H1 (cell line): ENCODE measurements at regions of chr11 and their contacts with region 1.

Region 1: DNA sequence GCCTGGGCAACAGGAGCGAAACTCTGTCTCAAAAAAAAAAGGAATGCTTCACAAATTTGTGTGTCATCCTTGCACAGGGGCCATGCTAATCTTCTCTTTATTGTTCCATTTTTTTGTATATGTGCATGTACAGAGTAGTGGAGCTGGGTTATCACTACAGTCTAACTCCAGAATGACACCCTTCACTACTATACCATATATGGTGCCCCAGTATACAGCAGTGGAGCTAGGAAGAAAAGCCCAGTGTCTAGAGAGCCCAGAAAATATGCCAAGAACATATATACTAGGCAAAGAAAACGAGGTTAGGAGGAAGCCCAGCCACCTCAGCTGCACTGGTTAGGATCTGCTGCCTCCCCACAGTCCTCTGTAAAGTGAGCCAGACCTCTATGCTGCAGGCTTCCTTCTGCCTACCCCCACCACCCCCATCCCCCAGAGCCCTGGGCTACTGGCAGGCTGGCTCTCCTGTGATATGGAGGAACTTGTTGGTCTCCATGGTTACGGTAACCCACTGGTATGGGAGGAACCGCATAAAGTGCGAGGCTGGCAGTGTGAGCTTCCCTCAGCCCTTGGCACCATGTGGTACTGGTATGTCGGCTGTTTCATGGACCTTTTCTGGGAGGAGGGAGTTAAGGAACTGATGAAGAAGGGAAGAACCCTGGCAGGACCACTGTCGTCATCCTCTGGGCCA is 34.3 kb downstream of the RCOR2 start:
- DNase-seq: peak in 1 of 2 experiments; percentile 69
- H3K4me3 ChIP-seq: peak overlapping the region in 2 of 4 experiments; percentile 10 to 13; a peak in 1 of 8 replicates
- H3K27ac ChIP-seq: no peak overlapping the region
- H3K4me1 ChIP-seq: peaks cover 13 to 30% (median 20%) of the 10 kb centered on the region in 4 experiments
- H3K27me3 ChIP-seq: no peaks in the 10 kb centered on the region
- CTCF ChIP-seq: no peak
- EP300 ChIP-seq: 0 out of 3 replicates have a peak, but pooled peaks of 1 of the 2 experiments have one; percentile 38
- POLR2A ChIP-seq: no peak; a peak in 1 of 3 replicates
- RAD21 ChIP-seq: 0 out of 4 replicates have a peak, but pooled peaks of 1 of the 2 experiments have one; percentile 3

Region 2: DNA sequence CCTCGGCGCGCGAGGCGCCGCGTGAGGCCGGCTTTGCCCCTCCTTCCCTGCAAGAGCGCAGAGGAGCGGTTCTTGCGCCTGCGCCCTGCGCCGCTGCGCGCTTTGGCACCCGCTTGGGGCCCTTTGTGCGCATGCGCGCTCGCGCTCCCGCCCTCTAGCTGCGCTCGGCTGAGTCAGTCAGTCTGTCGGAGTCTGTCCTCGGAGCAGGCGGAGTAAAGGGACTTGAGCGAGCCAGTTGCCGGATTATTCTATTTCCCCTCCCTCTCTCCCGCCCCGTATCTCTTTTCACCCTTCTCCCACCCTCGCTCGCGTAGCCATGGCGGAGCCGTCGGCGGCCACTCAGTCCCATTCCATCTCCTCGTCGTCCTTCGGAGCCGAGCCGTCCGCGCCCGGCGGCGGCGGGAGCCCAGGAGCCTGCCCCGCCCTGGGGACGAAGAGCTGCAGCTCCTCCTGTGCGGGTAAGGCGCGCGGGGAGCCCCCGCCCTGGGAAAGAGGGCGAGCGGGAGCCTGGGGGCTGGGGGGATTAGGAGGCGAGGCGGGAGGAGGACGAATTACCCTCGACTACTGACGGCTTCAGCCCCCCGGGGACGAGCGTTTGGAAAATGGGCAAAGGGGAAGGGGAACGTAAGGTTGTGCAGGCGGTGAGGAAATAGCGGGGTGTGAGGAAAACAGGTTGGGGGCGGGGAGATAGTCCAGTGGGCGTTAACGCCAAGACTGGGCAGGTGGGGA is 201.2 kb before region 1 on chr11 and contains the start of gene RTN3:
- CTCF ChIA-PET with region 1: no interaction called
- POLR2A ChIA-PET with region 1: no interaction called
- DNase-seq: peak; percentile 98 to 99
- H3K4me3 ChIP-seq: peak within 1 kb of the TSS; percentile 71 to 94 (median 89)
- H3K27ac ChIP-seq: peak within 1 kb of the TSS; percentile 68
- H3K4me1 ChIP-seq: peaks cover 0 to 10% (median 5%) of the 10 kb centered on the region in 4 experiments; a peak in 5 of 7 replicates
- H3K27me3 ChIP-seq: no peaks in the 10 kb centered on the region
- CTCF ChIP-seq: no peak; a peak in 1 of 4 replicates
- EP300 ChIP-seq: no peak
- POLR2A ChIP-seq: peak; percentile 80 to 92
- RAD21 ChIP-seq: no peak
- total RNA-seq, gene RTN3: 198 and 203 TPM in 2 replicates

Region 3: DNA sequence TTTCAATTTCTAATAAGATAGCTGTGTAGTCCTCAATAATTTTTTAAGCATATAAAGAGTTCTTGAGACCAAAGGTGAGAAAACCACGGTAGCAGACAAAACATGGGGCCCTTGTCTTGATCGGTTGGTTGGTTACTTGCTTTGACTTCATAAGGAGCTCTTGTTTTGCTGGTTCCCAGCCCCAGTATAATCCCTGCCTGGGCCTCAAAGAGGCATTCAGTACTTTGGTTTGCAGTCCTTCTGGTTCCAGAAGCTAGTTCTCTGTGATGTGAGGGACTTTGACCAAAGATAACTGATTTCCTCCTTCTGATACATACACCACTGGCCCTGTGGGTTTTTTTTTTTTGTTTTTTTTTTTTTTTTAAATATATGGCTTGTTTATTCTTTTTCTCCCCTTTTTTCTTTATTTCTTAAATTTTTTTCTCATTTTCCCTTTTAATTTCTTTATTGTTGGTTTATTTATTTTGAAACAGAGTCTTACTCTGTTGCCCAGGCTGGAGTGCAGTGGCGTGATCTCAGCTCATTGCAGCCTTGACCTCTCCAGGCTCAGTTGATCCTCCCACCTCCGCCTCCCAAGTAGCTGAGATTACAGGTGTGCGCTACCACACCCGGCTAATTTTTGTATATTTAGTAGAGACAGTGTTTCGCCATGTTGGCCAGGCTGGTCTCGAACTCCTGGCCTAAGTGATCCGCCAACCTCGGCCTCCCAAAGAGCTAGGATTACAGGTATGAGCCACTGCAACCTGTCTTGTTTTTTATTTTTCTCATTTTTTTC is 26.5 kb before region 1 on chr11:
- CTCF ChIA-PET with region 1: interaction called, 14 read pairs
- POLR2A ChIA-PET with region 1: interaction called, 3 read pairs
- DNase-seq: no peak
- H3K4me3 ChIP-seq: no peak overlapping the region
- H3K27ac ChIP-seq: no peak overlapping the region
- H3K4me1 ChIP-seq: peaks cover 0 to 5% (median 0%) of the 10 kb centered on the region in 4 experiments; a peak in 1 of 7 replicates
- H3K27me3 ChIP-seq: no peaks in the 10 kb centered on the region
- CTCF ChIP-seq: no peak
- EP300 ChIP-seq: no peak
- POLR2A ChIP-seq: no peak
- RAD21 ChIP-seq: no peak

Region 4: DNA sequence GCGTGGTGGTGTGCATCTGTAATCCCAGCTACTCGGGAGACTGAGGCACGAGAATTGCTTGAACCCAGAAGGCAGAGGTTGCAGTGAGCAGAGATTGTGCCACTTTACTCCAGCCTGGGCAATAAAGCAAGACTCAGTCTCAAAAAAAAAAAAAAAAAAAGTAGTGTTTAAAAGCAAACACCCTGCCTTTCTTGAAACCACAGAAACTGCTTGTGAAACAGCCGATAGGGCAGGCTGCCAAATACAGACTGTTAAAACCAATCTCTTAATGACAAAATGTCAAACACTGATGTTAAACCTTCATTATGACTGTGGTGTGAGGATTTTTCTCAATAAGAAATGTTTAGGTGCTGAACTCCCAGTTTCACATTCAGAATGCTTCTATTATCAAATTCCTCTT is 16.5 kb before region 1 on chr11:
- CTCF ChIA-PET with region 1: interaction called, 21 read pairs
- POLR2A ChIA-PET with region 1: interaction called, 7 read pairs
- DNase-seq: no peak
- H3K4me3 ChIP-seq: no peak overlapping the region
- H3K27ac ChIP-seq: no peak overlapping the region
- H3K4me1 ChIP-seq: peaks cover 0 to 16% (median 4%) of the 10 kb centered on the region in 4 experiments; a peak in 6 of 7 replicates
- H3K27me3 ChIP-seq: no peaks in the 10 kb centered on the region
- CTCF ChIP-seq: no peak
- EP300 ChIP-seq: no peak
- POLR2A ChIP-seq: no peak
- RAD21 ChIP-seq: no peak

Region 5: DNA sequence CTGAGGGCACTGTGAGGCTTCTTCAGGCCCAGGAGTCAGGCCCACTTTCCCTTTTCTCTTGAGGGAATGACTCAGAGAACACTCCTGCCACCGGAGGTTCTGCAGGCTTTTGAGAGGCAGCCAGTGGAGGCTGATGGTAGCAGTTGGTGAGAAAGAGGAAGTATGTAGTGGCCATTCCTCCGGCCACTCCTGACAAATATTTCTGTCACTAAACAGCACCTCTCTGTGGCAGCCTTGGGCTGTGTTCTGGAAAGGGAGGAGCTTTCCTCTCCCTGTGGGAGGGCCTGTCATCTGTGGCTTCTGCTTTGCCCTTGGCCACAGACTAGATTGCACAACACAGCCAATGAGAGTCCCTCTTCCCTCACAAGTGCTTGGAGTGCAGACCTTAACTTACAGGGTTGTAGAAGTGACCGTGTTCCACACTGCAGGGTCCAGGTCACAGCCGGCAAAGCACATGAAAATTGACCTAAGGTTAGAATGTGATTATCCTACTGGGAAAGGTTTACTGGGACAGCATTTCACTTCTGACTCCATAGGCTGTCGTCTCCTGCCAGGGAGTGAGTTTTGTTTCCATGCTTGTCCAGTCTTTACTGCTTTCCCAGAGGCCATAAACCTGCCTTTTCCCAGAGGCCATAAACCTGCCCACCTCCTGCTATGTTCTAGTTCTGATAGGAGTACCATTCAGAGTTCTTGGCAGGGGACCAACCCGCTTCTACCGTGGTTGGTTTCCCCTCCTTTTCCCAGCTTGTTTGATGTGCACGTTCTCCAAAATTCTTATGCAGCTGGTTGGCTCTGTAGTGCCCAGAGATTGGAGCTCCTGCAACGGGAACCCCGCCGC is 10.5 kb before region 1 on chr11:
- CTCF ChIA-PET with region 1: interaction called, 27 read pairs
- POLR2A ChIA-PET with region 1: interaction called, 4 read pairs
- DNase-seq: no peak
- H3K4me3 ChIP-seq: no peak overlapping the region
- H3K27ac ChIP-seq: no peak overlapping the region
- H3K4me1 ChIP-seq: peaks cover 4 to 25% (median 8%) of the 10 kb centered on the region in 4 experiments
- H3K27me3 ChIP-seq: no peaks in the 10 kb centered on the region
- CTCF ChIP-seq: peak; percentile 14 to 45 (median 34)
- EP300 ChIP-seq: no peak
- POLR2A ChIP-seq: no peak
- RAD21 ChIP-seq: peak; percentile 51 to 61

Region 6: GRCh38 chr11:63906585-63906984 is 23.9 kb after region 1 on chr11:
- CTCF ChIA-PET with region 1: interaction called, 45 read pairs
- POLR2A ChIA-PET with region 1: interaction called, 11 read pairs
- DNase-seq: peak in 1 of 2 experiments; percentile 69
- H3K4me3 ChIP-seq: no peak overlapping the region
- H3K27ac ChIP-seq: no peak overlapping the region
- H3K4me1 ChIP-seq: peaks cover 6 to 51% (median 41%) of the 10 kb centered on the region in 4 experiments
- H3K27me3 ChIP-seq: no peaks in the 10 kb centered on the region
- CTCF ChIP-seq: peak in 2 of 3 experiments; percentile 18 to 22; a peak in 2 of 4 replicates
- EP300 ChIP-seq: no peak
- POLR2A ChIP-seq: no peak
- RAD21 ChIP-seq: peak; percentile 28 to 39; a peak in 3 of 4 replicates